RWPE1 (cell line): ENCODE measurements at regions of chr1 and their contacts with region 1.

Region 1: GRCh38 chr1:41827991-41828570 is 90.6 kb downstream of the HIVEP3 start:
- DNase-seq: no peak
- H3K27ac ChIP-seq: no peak overlapping the region
- CTCF ChIP-seq: no peak

Region 2: GRCh38 chr1:41639332-41639936 is 188.6 kb before region 1 on chr1:
- CTCF ChIA-PET with region 1: no interaction called
- POLR2A ChIA-PET with region 1: no interaction called
- DNase-seq: no peak
- H3K27ac ChIP-seq: no peak overlapping the region
- CTCF ChIP-seq: no peak

Region 3: GRCh38 chr1:41661427-41662060 is 166.5 kb before region 1 on chr1:
- CTCF ChIA-PET with region 1: no interaction called
- POLR2A ChIA-PET with region 1: interaction called, 11 read pairs
- DNase-seq: no peak
- H3K27ac ChIP-seq: peak overlapping the region; percentile 79
- CTCF ChIP-seq: no peak